H1 (cell line): ENCODE measurements at regions of chr6 and their contacts with region 1.

Region 1: GRCh38 chr6:141496496-141496895 is 636.2 kb upstream of the GJE1 start:
- DNase-seq: no peak
- H3K4me3 ChIP-seq: no peak overlapping the region
- H3K27ac ChIP-seq: no peak overlapping the region
- H3K4me1 ChIP-seq: no peaks in the 10 kb centered on the region
- H3K27me3 ChIP-seq: no peaks in the 10 kb centered on the region
- CTCF ChIP-seq: no peak
- EP300 ChIP-seq: no peak
- POLR2A ChIP-seq: no peak
- RAD21 ChIP-seq: no peak

Region 2: DNA sequence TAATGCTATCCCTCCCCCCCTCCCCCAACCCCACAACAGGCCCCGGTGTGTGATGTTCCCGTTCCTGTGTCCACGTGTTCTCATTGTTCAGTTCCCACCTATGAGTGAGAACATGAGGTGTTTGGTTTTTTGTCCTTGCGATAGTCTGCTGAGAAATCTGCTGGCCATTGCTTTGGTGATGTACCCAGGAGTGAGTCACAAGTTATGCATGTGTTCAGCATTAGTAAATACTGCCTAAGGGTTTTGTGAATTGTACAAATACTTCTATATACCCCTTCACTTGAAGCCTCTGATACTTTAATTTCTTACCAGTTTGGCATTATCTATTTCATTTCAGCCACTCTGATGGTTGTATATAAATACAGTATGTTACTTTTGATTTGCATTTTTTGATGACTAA is 75.1 kb before region 1 on chr6:
- CTCF ChIA-PET with region 1: no interaction called
- POLR2A ChIA-PET with region 1: no interaction called
- DNase-seq: no peak
- H3K4me3 ChIP-seq: no peak overlapping the region
- H3K27ac ChIP-seq: no peak overlapping the region
- H3K4me1 ChIP-seq: no peaks in the 10 kb centered on the region
- H3K27me3 ChIP-seq: no peaks in the 10 kb centered on the region
- CTCF ChIP-seq: no peak
- EP300 ChIP-seq: no peak
- POLR2A ChIP-seq: no peak
- RAD21 ChIP-seq: no peak

Region 3: DNA sequence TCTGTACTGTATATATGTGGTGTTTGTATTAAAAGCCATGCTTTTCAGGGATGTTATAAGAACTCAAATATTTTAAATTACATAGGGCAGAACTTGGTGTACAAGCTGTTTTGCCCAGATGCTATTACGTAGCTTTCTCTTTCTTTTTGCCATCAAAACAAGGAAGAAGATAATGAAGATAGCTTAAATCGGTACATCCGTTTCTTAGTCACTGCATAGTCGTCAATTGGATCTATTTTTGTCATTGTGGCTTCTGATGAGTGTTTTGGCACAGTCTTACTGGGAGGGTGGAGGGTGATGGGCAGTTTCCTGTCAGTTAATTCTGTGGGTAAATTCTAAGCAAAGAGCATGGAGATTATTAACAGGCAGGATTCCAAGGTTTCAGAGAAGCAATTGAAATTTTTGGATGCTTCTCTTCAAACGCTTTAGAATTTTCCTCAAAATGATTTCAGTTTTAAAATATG is 12.9 kb before region 1 on chr6:
- CTCF ChIA-PET with region 1: interaction called, 10 read pairs
- POLR2A ChIA-PET with region 1: no interaction called
- DNase-seq: no peak
- H3K4me3 ChIP-seq: no peak overlapping the region
- H3K27ac ChIP-seq: no peak overlapping the region
- H3K4me1 ChIP-seq: no peaks in the 10 kb centered on the region
- H3K27me3 ChIP-seq: no peaks in the 10 kb centered on the region
- CTCF ChIP-seq: no peak
- EP300 ChIP-seq: no peak
- POLR2A ChIP-seq: no peak
- RAD21 ChIP-seq: no peak